ENCODE measurements at regions of chr11 and their contacts with region 1.

Region 1: GRCh38 chr11:83543706-83544439 is 257.7 kb upstream of the CCDC90B start:
- DNase-seq: no peak
- ATAC-seq: no peak
- H3K4me3 ChIP-seq: no peak overlapping the region
- H3K27ac ChIP-seq: no peak overlapping the region
- H3K4me1 ChIP-seq: no peaks in the 10 kb centered on the region
- H3K27me3 ChIP-seq: no peaks in the 10 kb centered on the region
- CTCF ChIP-seq: no peak
- POLR2A ChIP-seq: no peak

Region 2: DNA sequence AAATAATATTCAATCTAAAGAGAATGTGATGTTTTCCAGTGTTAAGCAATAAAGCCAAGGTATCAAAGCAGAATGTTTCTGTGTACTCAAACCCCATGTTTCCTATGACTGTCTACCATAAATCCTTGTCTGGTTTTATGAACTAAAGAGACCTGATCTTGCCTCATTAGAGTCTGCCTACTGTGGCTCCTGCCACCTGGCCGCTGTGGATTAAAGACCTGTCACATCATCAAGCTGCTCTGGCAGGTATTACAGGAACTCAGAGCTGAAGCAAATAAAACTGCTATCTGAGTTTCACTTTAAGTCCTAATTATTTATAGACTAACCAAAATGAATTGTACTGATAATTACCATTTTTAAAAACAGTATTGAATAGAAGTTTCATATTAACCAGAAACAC is 50.0 kb before region 1 on chr11:
- intact Hi-C with region 1: loop called in 1 of 10 experiments (anchors 2 kb)
- DNase-seq: no peak
- ATAC-seq: no peak
- H3K4me3 ChIP-seq: no peak overlapping the region
- H3K27ac ChIP-seq: no peak overlapping the region
- H3K4me1 ChIP-seq: no peaks in the 10 kb centered on the region
- H3K27me3 ChIP-seq: no peaks in the 10 kb centered on the region
- CTCF ChIP-seq: no peak
- POLR2A ChIP-seq: no peak

Region 3: GRCh38 chr11:84316866-84317555 is 773.1 kb after region 1 on chr11:
- intact Hi-C with region 1: no loop called
- DNase-seq: peak in 1 of 5 donors; percentile 44
- ATAC-seq: peak; percentile 75 to 89 (median 87)
- H3K4me3 ChIP-seq: peak overlapping the region in 8 of 12 donors; percentile 3 to 45 (median 24)
- H3K27ac ChIP-seq: no peak overlapping the region
- H3K4me1 ChIP-seq: peaks cover 0 to 4% (median 0%) of the 10 kb centered on the region in 12 donors
- H3K27me3 ChIP-seq: no peaks in the 10 kb centered on the region
- CTCF ChIP-seq: no peak
- POLR2A ChIP-seq: no peak